ENCODE measurements at regions of chr3 and their contacts with region 1.

Region 1: DNA sequence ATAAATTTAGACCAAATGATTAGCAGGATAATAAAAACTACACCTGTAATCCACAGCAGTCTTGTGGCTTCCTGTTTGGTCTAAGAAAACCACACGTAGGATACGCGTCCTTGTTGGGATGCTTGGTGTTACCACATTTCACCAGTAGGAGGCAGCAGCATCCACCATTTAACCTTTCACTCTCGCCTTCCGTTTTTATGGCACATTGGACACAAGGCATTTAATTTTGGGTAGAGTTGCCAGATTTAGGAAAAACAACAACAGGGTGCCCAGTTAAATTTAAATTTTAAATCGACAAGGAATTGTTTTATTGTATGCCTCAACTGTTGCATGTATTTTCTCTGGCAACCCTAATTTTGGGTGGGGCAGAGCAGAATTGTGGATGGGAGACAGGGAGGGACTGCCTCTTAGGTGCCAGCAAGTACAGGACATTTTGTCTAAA is 6.3 kb downstream of the LRRC31 start:
- DNase-seq: peak; percentile 71
- H3K4me3 ChIP-seq: no peak overlapping the region
- H3K27ac ChIP-seq: no peak overlapping the region
- H3K4me1 ChIP-seq: no peaks in the 10 kb centered on the region
- H3K27me3 ChIP-seq: no peaks in the 10 kb centered on the region
- CTCF ChIP-seq: peak; percentile 99

Region 2: DNA sequence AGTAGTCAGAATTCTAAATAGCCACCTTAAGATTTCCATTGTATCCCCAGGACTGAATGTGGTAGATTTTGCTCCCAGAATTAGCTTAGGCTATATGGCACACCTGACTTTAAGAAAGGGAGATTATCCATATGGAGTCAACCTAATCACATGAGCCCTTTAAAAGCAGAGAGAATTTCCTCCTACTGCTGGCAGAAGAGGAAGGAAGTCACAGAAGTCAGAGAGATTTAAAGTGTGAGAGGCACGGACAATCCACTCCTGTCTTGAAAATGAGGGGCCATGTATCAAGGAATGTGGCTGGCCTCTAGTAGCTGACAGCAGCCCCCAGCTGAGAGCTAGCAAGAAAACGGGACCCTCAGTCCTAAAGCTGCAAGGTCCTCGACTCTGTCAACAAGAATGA is 20.5 kb before region 1 on chr3:
- CTCF ChIA-PET with region 1: no interaction called
- POLR2A ChIA-PET with region 1: no interaction called
- intact Hi-C with region 1: no loop called
- DNase-seq: no peak
- H3K4me3 ChIP-seq: no peak overlapping the region
- H3K27ac ChIP-seq: no peak overlapping the region
- H3K4me1 ChIP-seq: no peaks in the 10 kb centered on the region
- H3K27me3 ChIP-seq: no peaks in the 10 kb centered on the region
- CTCF ChIP-seq: no peak

Region 3: GRCh38 chr3:170055209-170055608 is 191.7 kb after region 1 on chr3:
- CTCF ChIA-PET with region 1: no interaction called
- POLR2A ChIA-PET with region 1: interaction called, 4 read pairs
- intact Hi-C with region 1: loop called (anchors 1 kb)
- DNase-seq: peak in 1 of 2 experiments; percentile 48
- H3K4me3 ChIP-seq: no peak overlapping the region
- H3K27ac ChIP-seq: no peak overlapping the region
- H3K4me1 ChIP-seq: peaks cover 27% of the 10 kb centered on the region
- H3K27me3 ChIP-seq: no peaks in the 10 kb centered on the region
- CTCF ChIP-seq: no peak

Region 4: GRCh38 chr3:170171563-170171962 is 308.1 kb after region 1 on chr3:
- CTCF ChIA-PET with region 1: no interaction called
- POLR2A ChIA-PET with region 1: interaction called, 13 read pairs
- intact Hi-C with region 1: no loop called
- DNase-seq: no peak
- H3K4me3 ChIP-seq: no peak overlapping the region
- H3K27ac ChIP-seq: no peak overlapping the region
- H3K4me1 ChIP-seq: no peaks in the 10 kb centered on the region
- H3K27me3 ChIP-seq: no peaks in the 10 kb centered on the region
- CTCF ChIP-seq: no peak